ENCODE measurements at regions of chr1 and their contacts with region 1.

Region 1: GRCh38 chr1:99481391-99481996 is 164.4 kb upstream of the PALMD start:
- DNase-seq: peak; percentile 68
- H3K4me3 ChIP-seq: no peak overlapping the region
- H3K27ac ChIP-seq: no peak overlapping the region
- H3K4me1 ChIP-seq: no peaks in the 10 kb centered on the region
- H3K27me3 ChIP-seq: no peaks in the 10 kb centered on the region
- CTCF ChIP-seq: peak; percentile 85

Region 2: GRCh38 chr1:98794196-98794886 is 687.2 kb before region 1 on chr1:
- CTCF ChIA-PET with region 1: no interaction called
- POLR2A ChIA-PET with region 1: no interaction called
- intact Hi-C with region 1: loop called (anchors 2 kb)
- DNase-seq: peak; percentile 73
- H3K4me3 ChIP-seq: no peak overlapping the region
- H3K27ac ChIP-seq: no peak overlapping the region
- H3K4me1 ChIP-seq: no peaks in the 10 kb centered on the region
- H3K27me3 ChIP-seq: no peaks in the 10 kb centered on the region
- CTCF ChIP-seq: peak; percentile 79

Region 3: DNA sequence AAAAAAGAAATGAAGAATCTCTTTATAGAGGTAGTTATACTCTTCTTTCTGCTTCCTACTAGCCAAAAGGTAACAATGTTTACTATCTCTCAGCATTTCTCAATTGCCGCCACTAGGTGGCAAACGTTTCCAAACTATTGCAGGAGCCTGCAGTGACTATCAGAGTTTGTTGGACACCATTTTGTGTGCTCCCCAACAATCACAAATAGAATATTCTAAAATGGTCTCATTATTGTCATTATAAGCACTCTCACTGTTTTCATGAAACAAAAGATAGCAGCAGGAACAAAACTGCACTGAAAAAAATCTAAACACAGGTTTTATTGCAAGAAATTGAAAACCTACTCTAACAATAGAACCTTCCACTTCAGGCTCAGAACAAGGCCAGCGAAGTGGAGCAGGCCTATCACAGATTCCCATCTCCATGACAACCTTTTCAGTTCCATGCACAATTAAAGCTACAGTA is 301.1 kb before region 1 on chr1:
- CTCF ChIA-PET with region 1: no interaction called
- POLR2A ChIA-PET with region 1: no interaction called
- intact Hi-C with region 1: loop called (anchors 1 kb)
- DNase-seq: peak; percentile 87
- H3K4me3 ChIP-seq: no peak overlapping the region
- H3K27ac ChIP-seq: no peak overlapping the region
- H3K4me1 ChIP-seq: no peaks in the 10 kb centered on the region
- H3K27me3 ChIP-seq: no peaks in the 10 kb centered on the region
- CTCF ChIP-seq: peak; percentile 88

Region 4: GRCh38 chr1:99737016-99737415 is 255.5 kb after region 1 on chr1:
- CTCF ChIA-PET with region 1: no interaction called
- POLR2A ChIA-PET with region 1: no interaction called
- intact Hi-C with region 1: loop called (anchors 10 kb)
- DNase-seq: peak; percentile 78
- H3K4me3 ChIP-seq: no peak overlapping the region
- H3K27ac ChIP-seq: no peak overlapping the region
- H3K4me1 ChIP-seq: no peaks in the 10 kb centered on the region
- H3K27me3 ChIP-seq: no peaks in the 10 kb centered on the region
- CTCF ChIP-seq: peak; percentile 65